Breast epithelium (tissue), 4 donors: ENCODE measurements at regions of chr5 and their contacts with region 1.

Region 1: DNA sequence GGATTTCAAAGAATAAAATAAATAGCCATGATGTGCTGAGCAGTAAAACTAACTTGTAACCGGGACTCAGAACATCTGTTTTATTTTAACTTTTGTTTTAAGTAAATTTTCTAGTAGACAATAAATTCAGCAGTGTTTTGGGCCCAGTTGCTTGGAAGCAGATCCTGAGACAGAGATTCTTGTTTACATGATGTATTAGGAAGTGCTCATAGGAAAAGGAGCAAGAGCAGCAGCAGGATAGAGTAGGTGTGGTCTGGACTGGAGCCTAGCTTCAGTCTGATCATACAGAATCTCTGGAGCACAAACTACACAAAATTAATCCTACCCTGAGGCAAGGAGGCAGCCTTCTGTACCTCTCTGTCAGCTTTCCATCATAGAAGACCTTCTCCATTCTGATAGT is 139.2 kb upstream of the CCNH start:
- DNase-seq: no peak
- H3K4me3 ChIP-seq: no peak overlapping the region
- H3K27ac ChIP-seq: no peak overlapping the region
- H3K4me1 ChIP-seq: no peaks in the 10 kb centered on the region
- H3K27me3 ChIP-seq: no peaks in the 10 kb centered on the region
- CTCF ChIP-seq: no peak
- POLR2A ChIP-seq: no peak

Region 2: DNA sequence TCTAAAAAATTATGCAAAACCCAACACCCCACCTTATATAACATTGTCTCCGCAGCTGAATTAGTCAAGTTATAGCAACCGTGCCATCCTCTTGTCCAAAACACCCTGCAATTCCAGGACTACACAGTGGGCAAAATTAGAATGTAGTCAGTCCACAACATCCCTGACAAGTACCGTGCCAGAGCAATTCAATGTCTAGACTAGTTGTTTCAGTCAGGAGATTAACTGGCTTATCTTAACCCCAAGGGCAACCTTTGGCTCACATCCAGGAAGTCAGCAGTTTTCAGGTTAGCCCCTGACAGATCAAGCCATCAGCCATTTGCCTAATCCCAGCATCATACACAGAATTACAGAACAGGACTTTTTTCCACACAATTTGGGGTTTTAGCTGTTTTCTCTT is 957.5 kb after region 1 on chr5:
- intact Hi-C with region 1: loop called (anchors 5 kb)
- DNase-seq: no peak
- H3K4me3 ChIP-seq: no peak overlapping the region
- H3K27ac ChIP-seq: no peak overlapping the region
- H3K4me1 ChIP-seq: no peaks in the 10 kb centered on the region
- H3K27me3 ChIP-seq: no peaks in the 10 kb centered on the region
- CTCF ChIP-seq: no peak
- POLR2A ChIP-seq: no peak